ENCODE measurements at regions of chr14 and their contacts with region 1.

Region 1: GRCh38 chr14:67571272-67571850 is 28.7 kb downstream of the PIGH start:
- DNase-seq: peak; percentile 67 to 87 (median 76)
- H3K4me3 ChIP-seq: no peak overlapping the region
- H3K27ac ChIP-seq: no peak overlapping the region
- H3K4me1 ChIP-seq: peaks cover 12 to 17% of the 10 kb centered on the region in 2 donors
- H3K27me3 ChIP-seq: no peaks in the 10 kb centered on the region
- CTCF ChIP-seq: peak; percentile 81 to 93 (median 87)
- POLR2A ChIP-seq: no peak

Region 2: DNA sequence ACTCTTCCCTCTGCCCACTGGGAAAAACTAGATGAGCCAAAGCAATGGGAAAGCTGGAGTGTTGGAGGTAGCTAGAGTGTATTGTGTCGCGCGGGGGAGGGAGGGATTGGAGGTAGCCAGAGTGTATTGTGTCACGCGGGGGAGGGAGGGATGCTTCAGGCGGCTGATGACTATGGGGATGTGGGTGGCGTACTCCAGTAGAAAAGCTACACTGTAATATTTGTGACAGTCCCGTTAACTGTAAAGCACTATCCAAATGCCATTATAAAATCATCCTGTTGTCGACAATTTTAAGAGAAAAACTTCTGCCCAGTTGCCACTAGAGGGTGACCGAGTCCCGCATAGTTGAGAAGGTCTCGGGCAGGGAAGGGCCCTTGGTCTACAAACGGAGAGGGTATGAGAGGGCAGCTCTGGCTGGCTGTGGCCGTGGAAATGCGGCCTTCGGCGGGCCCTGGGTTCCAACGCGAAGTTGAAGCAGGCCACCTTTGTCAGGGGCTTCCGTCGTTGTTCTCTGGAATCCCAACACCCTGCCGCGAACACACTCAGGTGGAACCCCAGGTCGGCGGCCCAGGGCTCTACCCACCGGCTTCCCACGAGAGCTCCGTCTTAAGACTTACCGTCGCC is 144.3 kb before region 1 on chr14:
- intact Hi-C with region 1: loop called (anchors 5 kb)
- DNase-seq: peak; percentile 80 to 91 (median 87)
- H3K4me3 ChIP-seq: no peak overlapping the region
- H3K27ac ChIP-seq: no peak overlapping the region
- H3K4me1 ChIP-seq: peaks cover 0 to 4% of the 10 kb centered on the region in 2 donors
- H3K27me3 ChIP-seq: no peaks in the 10 kb centered on the region
- CTCF ChIP-seq: peak; percentile 85 to 91 (median 88)
- POLR2A ChIP-seq: no peak

Region 3: GRCh38 chr14:67526676-67527459 is 44.5 kb before region 1 on chr14:
- intact Hi-C with region 1: loop called (anchors 5 kb)
- DNase-seq: peak; percentile 55 to 84 (median 70)
- H3K4me3 ChIP-seq: no peak overlapping the region
- H3K27ac ChIP-seq: peak overlapping the region in 1 of 5 donors; percentile 8
- H3K4me1 ChIP-seq: no peaks in the 10 kb centered on the region
- H3K27me3 ChIP-seq: no peaks in the 10 kb centered on the region
- CTCF ChIP-seq: peak; percentile 53 to 97 (median 80)
- POLR2A ChIP-seq: no peak

Region 4: DNA sequence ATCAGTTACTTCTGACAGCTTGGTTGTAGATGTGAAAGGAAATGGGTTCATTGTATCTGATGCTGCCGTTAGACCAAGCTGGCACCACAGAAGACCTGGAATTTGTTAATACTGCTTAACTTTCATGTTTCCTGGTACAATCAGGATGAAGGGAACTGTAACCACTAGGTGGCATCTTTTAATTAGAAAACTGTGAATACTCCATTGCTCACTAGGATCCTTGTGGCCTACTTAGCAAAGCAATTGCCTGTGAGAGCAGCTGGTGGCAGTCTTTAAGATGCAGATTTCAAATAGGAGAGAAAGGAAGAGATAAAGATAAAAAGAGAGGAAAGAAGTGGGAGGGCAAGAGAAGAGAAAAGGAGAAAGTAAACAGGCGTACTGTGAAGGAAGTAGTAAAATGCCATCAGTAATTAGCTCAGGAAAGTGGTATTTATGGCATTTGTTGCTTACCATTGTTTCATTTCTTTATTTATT is 362.7 kb after region 1 on chr14:
- intact Hi-C with region 1: no loop called
- DNase-seq: peak in 4 of 7 donors; percentile 20 to 40 (median 26)
- H3K4me3 ChIP-seq: no peak overlapping the region
- H3K27ac ChIP-seq: peak overlapping the region in 1 of 5 donors; percentile 2
- H3K4me1 ChIP-seq: peaks cover 0 to 4% of the 10 kb centered on the region in 2 donors
- H3K27me3 ChIP-seq: no peaks in the 10 kb centered on the region
- CTCF ChIP-seq: peak; percentile 53 to 85 (median 72)
- POLR2A ChIP-seq: no peak

Measured in adrenal gland (tissue), 19 donors.